Upper lobe of right lung (tissue), 1 donor: ENCODE measurements at regions of chr17 and their contacts with region 1.

Region 1: GRCh38 chr17:49315551-49316257 is 46.3 kb downstream of the ZNF652 start:
- DNase-seq: peak; percentile 71
- ATAC-seq: peak; percentile 99
- H3K4me3 ChIP-seq: no peak overlapping the region
- H3K27ac ChIP-seq: no peak overlapping the region
- H3K4me1 ChIP-seq: peaks cover 5% of the 10 kb centered on the region
- H3K27me3 ChIP-seq: no peaks in the 10 kb centered on the region
- CTCF ChIP-seq: peak; percentile 86

Region 2: DNA sequence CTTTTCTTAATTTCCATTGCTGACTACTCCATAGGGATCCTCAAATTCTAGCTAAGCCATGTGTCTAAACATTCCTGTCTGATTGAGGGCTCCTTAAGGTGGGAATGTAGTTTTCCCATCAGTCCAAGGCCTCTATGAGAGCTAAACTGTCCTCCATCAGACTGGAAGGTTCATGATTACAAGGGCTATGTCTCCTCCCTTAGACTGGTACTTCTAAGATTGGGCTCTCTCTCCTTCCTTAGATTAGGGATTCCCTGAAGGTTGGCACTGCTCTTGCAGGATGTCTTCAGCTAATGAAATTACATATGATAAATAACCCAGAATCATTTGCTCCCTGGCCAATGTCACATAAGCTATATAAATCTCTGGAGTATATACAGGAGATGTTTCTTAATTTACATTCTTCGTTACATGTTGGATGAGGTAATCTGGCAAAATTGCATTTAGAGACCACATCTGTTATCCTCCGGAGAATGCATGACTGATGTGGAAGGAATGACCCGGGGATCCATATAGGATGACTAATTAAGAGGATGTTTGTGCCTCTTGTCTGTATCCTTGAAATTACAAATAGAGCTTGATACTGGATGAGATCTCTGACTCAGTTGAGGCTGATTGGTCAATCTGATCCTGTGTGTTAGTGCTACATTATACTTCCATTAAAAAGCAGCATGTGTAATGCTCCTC is 168.9 kb before region 1 on chr17:
- intact Hi-C with region 1: no loop called
- DNase-seq: no peak
- ATAC-seq: no peak
- H3K4me3 ChIP-seq: no peak overlapping the region
- H3K27ac ChIP-seq: no peak overlapping the region
- H3K4me1 ChIP-seq: no peaks in the 10 kb centered on the region
- H3K27me3 ChIP-seq: peaks cover 16% of the 10 kb centered on the region
- CTCF ChIP-seq: no peak

Region 3: GRCh38 chr17:49393491-49394255 is 78.0 kb after region 1 on chr17:
- intact Hi-C with region 1: loop called (anchors 2 kb)
- DNase-seq: no peak
- ATAC-seq: no peak
- H3K4me3 ChIP-seq: no peak overlapping the region
- H3K27ac ChIP-seq: no peak overlapping the region
- H3K4me1 ChIP-seq: peaks cover 32% of the 10 kb centered on the region
- H3K27me3 ChIP-seq: no peaks in the 10 kb centered on the region
- CTCF ChIP-seq: no peak